Esophagus muscularis mucosa (tissue), 4 donors: ENCODE measurements at regions of chr1 and their contacts with region 1.

Region 1: DNA sequence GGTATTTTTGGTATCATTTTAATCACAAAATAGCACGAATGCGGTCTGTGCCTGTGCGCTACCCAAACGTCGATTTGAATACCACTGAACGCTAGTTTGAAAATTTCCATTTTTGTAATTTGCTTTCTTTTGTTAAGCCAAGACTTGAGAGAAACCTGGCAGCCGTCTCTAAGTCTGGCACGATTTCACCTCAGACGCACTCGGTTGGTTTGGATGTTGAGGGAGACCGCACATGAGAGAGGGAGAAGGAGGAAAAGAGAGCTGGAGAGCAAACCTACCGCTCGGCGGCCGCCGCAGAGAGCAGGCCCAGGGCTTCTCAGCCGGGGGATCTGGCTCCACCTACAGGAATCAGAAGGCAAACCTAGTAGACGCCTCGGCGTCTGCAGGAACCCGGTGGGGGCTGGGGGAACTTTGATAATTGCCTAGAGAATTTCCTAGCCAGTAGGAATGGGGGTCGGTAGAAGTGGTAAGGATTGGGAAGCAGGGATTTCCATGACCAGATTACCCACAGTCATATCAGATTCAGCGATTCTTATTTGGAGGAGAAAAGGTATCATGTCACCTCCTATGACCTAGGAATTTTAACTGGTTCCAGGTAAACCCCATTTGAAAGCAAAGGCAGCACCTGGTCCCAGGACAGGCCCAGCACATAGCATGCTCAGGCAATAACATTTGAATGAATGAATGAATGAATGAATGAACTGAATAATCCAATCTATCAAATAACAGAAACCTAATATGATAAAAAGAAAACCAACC is 83.2 kb downstream of the TM2D1 start:
- DNase-seq: peak; percentile 95
- H3K4me3 ChIP-seq: peak overlapping the region; percentile 17 to 47 (median 34)
- H3K27ac ChIP-seq: peak overlapping the region; percentile 76 to 85 (median 79)
- H3K4me1 ChIP-seq: peaks cover 15 to 60% (median 51%) of the 10 kb centered on the region in 4 donors
- H3K27me3 ChIP-seq: peaks cover 0 to 3% (median 0%) of the 10 kb centered on the region in 4 donors
- CTCF ChIP-seq: peak; percentile 70 to 84 (median 70)
- EP300 ChIP-seq: no peak
- POLR2A ChIP-seq: no peak

Region 2: DNA sequence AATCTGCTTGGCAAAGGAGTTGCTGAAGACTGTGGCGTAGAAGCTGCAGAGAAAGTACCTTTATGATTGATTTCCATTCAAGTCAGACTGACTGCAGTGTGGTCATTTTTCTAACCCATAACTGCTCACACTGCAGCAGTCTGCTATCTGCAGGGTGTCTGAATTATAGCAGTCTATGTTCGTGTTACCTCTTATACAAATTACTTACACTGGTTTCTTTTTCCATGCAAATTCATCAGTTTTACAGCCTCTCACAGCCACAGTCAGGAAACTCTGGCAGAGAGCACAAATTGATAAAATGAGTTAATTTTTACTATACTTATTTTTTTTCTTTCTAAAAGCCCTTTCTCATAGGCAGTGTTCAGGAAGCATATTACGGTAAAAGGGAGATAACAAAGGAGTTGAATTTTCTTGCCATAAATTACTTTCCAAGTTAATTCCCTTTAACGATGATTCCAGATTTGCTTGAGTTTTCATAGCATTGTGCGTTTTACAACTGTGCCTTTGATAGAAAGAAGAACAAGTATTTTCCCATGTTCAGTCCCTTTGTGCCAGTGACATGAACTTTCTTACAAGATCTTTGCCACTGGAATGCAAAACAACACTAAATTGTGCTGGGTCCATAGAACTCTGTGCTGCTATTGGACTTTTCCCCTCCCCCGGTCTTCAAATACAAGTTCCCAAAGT is 297.9 kb before region 1 on chr1:
- intact Hi-C with region 1: loop called (anchors 10 kb)
- DNase-seq: no peak
- H3K4me3 ChIP-seq: no peak overlapping the region
- H3K27ac ChIP-seq: peak overlapping the region in 3 of 4 donors; percentile 5 to 41 (median 14)
- H3K4me1 ChIP-seq: peaks cover 20 to 33% (median 26%) of the 10 kb centered on the region in 4 donors
- H3K27me3 ChIP-seq: no peaks in the 10 kb centered on the region
- CTCF ChIP-seq: no peak
- EP300 ChIP-seq: no peak
- POLR2A ChIP-seq: no peak

Region 3: DNA sequence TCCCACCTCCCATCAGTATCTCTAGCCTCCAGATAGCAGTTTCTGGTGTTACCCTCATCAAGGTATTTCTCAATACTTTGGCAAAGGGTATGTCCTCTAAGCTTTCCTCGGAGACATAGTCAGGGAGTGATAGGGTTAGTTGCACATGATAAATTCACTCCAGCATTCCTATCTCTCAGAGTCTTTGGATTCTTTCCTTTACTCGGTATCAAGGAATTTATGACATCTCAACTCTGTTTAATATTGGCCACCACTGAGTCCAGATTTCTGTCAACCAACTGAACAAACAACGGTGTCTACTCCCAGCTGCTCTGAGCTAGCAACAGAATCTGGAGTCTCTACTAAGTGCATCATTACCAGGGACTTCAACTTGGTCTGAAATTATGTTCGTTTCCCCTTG is 150.3 kb before region 1 on chr1:
- intact Hi-C with region 1: loop called (anchors 10 kb)
- DNase-seq: no peak
- H3K4me3 ChIP-seq: no peak overlapping the region
- H3K27ac ChIP-seq: peak overlapping the region; percentile 38 to 67 (median 46)
- H3K4me1 ChIP-seq: peaks cover 9 to 29% (median 20%) of the 10 kb centered on the region in 4 donors
- H3K27me3 ChIP-seq: no peaks in the 10 kb centered on the region
- CTCF ChIP-seq: no peak
- EP300 ChIP-seq: no peak
- POLR2A ChIP-seq: no peak

Region 4: GRCh38 chr1:61757945-61758344 is 116.2 kb after region 1 on chr1:
- intact Hi-C with region 1: no loop called
- DNase-seq: peak; percentile 53
- H3K4me3 ChIP-seq: no peak overlapping the region
- H3K27ac ChIP-seq: no peak overlapping the region
- H3K4me1 ChIP-seq: no peaks in the 10 kb centered on the region
- H3K27me3 ChIP-seq: no peaks in the 10 kb centered on the region
- CTCF ChIP-seq: no peak
- EP300 ChIP-seq: no peak
- POLR2A ChIP-seq: no peak